Caco-2 (cell line): ENCODE measurements at regions of chr9 and their contacts with region 1.

Region 1: GRCh38 chr9:136482793-136483588 is at the start of gene SEC16A:
- DNase-seq: peak; percentile 99
- H3K4me3 ChIP-seq: peak within 1 kb of the TSS; percentile 85
- H3K4me3 Mint-ChIP-seq: peak within 1 kb of the TSS; percentile 98
- H3K27ac Mint-ChIP-seq: peak within 1 kb of the TSS; percentile 100
- H3K4me1 ChIP-seq: peaks cover 16% of the 10 kb centered on the region
- H3K4me1 Mint-ChIP-seq: peaks cover 6% of the 10 kb centered on the region
- H3K27me3 ChIP-seq: no peaks in the 10 kb centered on the region
- H3K27me3 Mint-ChIP-seq: no peaks in the 10 kb centered on the region
- CTCF ChIP-seq: no peak
- total RNA-seq, gene SEC16A: 76.4 and 81.3 TPM in 2 replicates

Region 2: GRCh38 chr9:136545966-136546698 is 63.1 kb after region 1 on chr9 and contains the start of gene NOTCH1:
- CTCF ChIA-PET with region 1: interaction called, 8 read pairs
- POLR2A ChIA-PET with region 1: no interaction called
- intact Hi-C with region 1: loop called (anchors 5 kb)
- DNase-seq: peak; percentile 88 to 89
- H3K4me3 ChIP-seq: peak within 1 kb of the TSS; percentile 53
- H3K4me3 Mint-ChIP-seq: peak within 1 kb of the TSS; percentile 80
- H3K27ac Mint-ChIP-seq: peak within 1 kb of the TSS; percentile 51
- H3K4me1 ChIP-seq: peaks cover 24% of the 10 kb centered on the region
- H3K4me1 Mint-ChIP-seq: peaks cover under 1% of the 10 kb centered on the region
- H3K27me3 ChIP-seq: no peaks in the 10 kb centered on the region
- H3K27me3 Mint-ChIP-seq: no peaks in the 10 kb centered on the region
- CTCF ChIP-seq: no peak
- total RNA-seq, gene NOTCH1: 5.5 and 6.3 TPM in 2 replicates

Region 3: GRCh38 chr9:136617746-136618579 is 135.0 kb after region 1 on chr9:
- CTCF ChIA-PET with region 1: no interaction called
- POLR2A ChIA-PET with region 1: no interaction called
- intact Hi-C with region 1: no loop called
- DNase-seq: no peak
- H3K4me3 ChIP-seq: no peak overlapping the region
- H3K4me3 Mint-ChIP-seq: no peak overlapping the region
- H3K27ac Mint-ChIP-seq: peak overlapping the region; percentile 37
- H3K4me1 ChIP-seq: peaks cover 26% of the 10 kb centered on the region; the same call in 1 of the 2 replicates
- H3K4me1 Mint-ChIP-seq: peaks cover 8% of the 10 kb centered on the region
- H3K27me3 ChIP-seq: no peaks in the 10 kb centered on the region
- H3K27me3 Mint-ChIP-seq: no peaks in the 10 kb centered on the region
- CTCF ChIP-seq: no peak

Region 4: DNA sequence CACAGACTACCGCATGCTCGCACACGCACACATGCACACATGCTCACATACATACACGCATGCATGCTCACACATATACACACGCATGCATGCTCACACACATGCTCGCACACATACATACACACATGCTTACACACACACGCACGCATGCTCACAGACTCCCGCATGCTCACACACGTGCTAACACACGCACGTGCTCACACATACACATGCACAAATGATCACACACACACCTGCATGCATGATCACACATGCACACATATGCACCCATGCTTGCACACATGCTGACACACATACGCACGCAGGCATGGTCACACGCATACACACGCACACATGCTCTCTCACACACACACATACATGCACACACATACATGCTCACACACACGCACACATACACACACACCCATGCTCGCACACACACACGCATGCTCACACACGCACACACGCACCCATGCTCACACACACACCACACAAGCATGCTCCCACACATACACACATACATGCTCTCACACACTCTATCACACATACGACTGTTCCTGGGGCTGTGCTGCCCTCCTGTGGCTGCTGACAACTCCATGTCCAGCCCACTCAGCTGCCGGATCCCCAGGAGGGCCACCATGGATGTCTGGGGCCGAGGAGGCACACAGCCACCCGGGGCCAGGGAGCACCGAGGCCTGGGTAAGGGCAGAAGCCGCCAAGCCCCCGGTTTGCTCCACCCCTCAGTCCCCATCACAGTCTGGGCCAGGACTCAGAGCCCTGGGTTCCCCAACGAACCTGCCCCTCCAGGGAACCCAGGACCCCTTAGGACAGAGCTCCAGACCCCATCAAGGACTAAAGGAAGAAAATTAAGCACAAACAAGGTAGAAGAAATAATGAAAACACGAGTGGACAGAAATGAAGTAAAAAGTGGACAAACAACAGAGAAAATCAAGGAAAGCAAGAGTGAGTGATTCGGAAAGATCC is 148.3 kb after region 1 on chr9:
- CTCF ChIA-PET with region 1: interaction called, 140 read pairs
- POLR2A ChIA-PET with region 1: interaction called, 9 read pairs
- intact Hi-C with region 1: loop called (anchors 1 kb)
- DNase-seq: peak; percentile 81 to 85
- H3K4me3 ChIP-seq: no peak overlapping the region
- H3K4me3 Mint-ChIP-seq: no peak overlapping the region
- H3K27ac Mint-ChIP-seq: no peak overlapping the region
- H3K4me1 ChIP-seq: peaks cover 16% of the 10 kb centered on the region
- H3K4me1 Mint-ChIP-seq: peaks cover 5% of the 10 kb centered on the region
- H3K27me3 ChIP-seq: no peaks in the 10 kb centered on the region
- H3K27me3 Mint-ChIP-seq: peaks cover 14% of the 10 kb centered on the region
- CTCF ChIP-seq: peak; percentile 79 to 84